ENCODE measurements at regions of chr9 and their contacts with region 1.

Region 1: GRCh38 chr9:120936011-120936763 is 9.6 kb upstream of the TRAF1 start:
- DNase-seq: peak; percentile 83
- ATAC-seq: peak; percentile 98
- H3K4me3 ChIP-seq: no peak overlapping the region
- H3K27ac ChIP-seq: peak overlapping the region; percentile 36; the same call in 1 of the 2 replicates
- H3K4me1 ChIP-seq: peaks cover 18 to 23% of the 10 kb centered on the region in 2 experiments
- H3K27me3 ChIP-seq: no peaks in the 10 kb centered on the region
- CTCF ChIP-seq: peak; percentile 93 to 98 (median 97)
- POLR2A ChIP-seq: no peak
- RAD21 ChIP-seq: peak; percentile 95

Region 2: GRCh38 chr9:120619751-120620655 is 316.2 kb before region 1 on chr9:
- CTCF ChIA-PET with region 1: no interaction called
- POLR2A ChIA-PET with region 1: no interaction called
- RAD21 ChIA-PET with region 1: no interaction called
- intact Hi-C with region 1: loop called (anchors 2 kb)
- DNase-seq: peak; percentile 47
- ATAC-seq: peak; percentile 94
- H3K4me3 ChIP-seq: no peak overlapping the region
- H3K27ac ChIP-seq: no peak overlapping the region
- H3K4me1 ChIP-seq: peaks cover under 1 to 6% of the 10 kb centered on the region in 2 experiments; a peak in 3 of 4 replicates
- H3K27me3 ChIP-seq: no peaks in the 10 kb centered on the region
- CTCF ChIP-seq: peak; percentile 67 to 92 (median 78)
- POLR2A ChIP-seq: no peak
- RAD21 ChIP-seq: peak; percentile 78

Region 3: GRCh38 chr9:120755827-120756434 is 180.3 kb before region 1 on chr9:
- CTCF ChIA-PET with region 1: interaction called, 29 read pairs
- POLR2A ChIA-PET with region 1: no interaction called
- RAD21 ChIA-PET with region 1: interaction called in 1 of 2 experiments, 4 read pairs
- intact Hi-C with region 1: loop called (anchors 1 kb)
- DNase-seq: peak; percentile 24
- ATAC-seq: peak; percentile 86
- H3K4me3 ChIP-seq: no peak overlapping the region
- H3K27ac ChIP-seq: no peak overlapping the region
- H3K4me1 ChIP-seq: no peaks in the 10 kb centered on the region
- H3K27me3 ChIP-seq: no peaks in the 10 kb centered on the region
- CTCF ChIP-seq: peak; percentile 74 to 93 (median 76)
- POLR2A ChIP-seq: no peak
- RAD21 ChIP-seq: peak; percentile 92

Region 4: DNA sequence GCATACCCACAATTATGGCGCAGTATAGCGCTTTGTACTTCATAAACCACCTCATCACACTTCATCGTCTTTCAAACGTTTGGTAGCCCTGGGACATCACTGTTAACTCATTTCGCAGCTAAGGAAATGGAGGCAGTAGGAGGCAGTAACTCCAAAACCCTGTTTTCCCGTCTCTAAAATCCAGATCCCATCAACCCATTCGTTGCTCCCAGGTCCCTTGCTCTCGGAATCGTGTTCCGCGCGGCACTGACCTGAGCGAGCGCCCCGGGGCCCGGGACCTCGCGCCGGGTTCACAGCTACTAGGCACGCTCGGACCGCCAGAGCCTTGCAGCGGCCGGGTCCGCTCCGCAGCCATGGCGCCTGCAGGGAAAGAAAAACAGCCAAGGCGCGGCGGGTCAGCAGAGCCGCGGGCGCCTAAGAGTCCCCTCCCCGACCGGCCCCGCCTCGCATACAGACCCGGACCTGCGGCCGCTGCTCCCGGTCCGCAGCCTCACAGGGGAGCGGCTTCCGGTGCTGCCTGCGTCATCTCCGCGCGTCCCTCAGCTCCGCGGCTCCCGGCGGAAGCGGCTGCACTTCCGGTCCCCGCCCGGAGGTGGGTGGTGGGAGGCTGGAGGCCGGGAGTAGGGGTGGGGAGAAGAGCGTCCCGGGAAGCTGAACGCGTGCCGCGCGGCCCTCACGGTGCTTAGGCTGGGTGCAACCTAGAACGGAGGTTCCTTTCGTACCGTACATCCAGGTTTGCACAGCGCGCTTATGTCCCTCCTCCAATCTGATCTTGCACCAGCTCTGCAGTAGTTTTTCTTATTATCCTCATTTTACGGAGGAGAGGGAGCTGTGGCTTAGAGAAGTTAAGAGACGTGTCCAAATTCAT is 143.1 kb before region 1 on chr9 and contains the start of gene FBXW2:
- CTCF ChIA-PET with region 1: no interaction called
- POLR2A ChIA-PET with region 1: interaction called, 3 read pairs
- RAD21 ChIA-PET with region 1: no interaction called
- intact Hi-C with region 1: loop called (anchors 1 kb)
- DNase-seq: peak; percentile 75
- ATAC-seq: peak; percentile 95
- H3K4me3 ChIP-seq: peak within 1 kb of the TSS; percentile 90 to 97
- H3K27ac ChIP-seq: peak within 1 kb of the TSS; percentile 77
- H3K4me1 ChIP-seq: peaks cover 0 to 19% of the 10 kb centered on the region in 2 experiments
- H3K27me3 ChIP-seq: no peaks in the 10 kb centered on the region
- CTCF ChIP-seq: no peak
- POLR2A ChIP-seq: peak; percentile 83
- RAD21 ChIP-seq: no peak
- total RNA-seq, gene FBXW2: 59.6 TPM

Region 5: GRCh38 chr9:120842690-120843499 is 93.3 kb before region 1 on chr9 and contains the start of gene PSMD5:
- CTCF ChIA-PET with region 1: interaction called, 3 read pairs
- POLR2A ChIA-PET with region 1: no interaction called
- RAD21 ChIA-PET with region 1: no interaction called
- intact Hi-C with region 1: loop called (anchors 1 kb)
- DNase-seq: peak; percentile 99
- ATAC-seq: peak; percentile 99
- H3K4me3 ChIP-seq: peak within 1 kb of the TSS; percentile 88 to 99
- H3K27ac ChIP-seq: peak within 1 kb of the TSS; percentile 65
- H3K4me1 ChIP-seq: peaks cover 9 to 20% of the 10 kb centered on the region in 2 experiments
- H3K27me3 ChIP-seq: no peaks in the 10 kb centered on the region
- CTCF ChIP-seq: no peak
- POLR2A ChIP-seq: peak; percentile 96
- RAD21 ChIP-seq: no peak
- total RNA-seq, gene PSMD5: 64.3 TPM

Region 6: DNA sequence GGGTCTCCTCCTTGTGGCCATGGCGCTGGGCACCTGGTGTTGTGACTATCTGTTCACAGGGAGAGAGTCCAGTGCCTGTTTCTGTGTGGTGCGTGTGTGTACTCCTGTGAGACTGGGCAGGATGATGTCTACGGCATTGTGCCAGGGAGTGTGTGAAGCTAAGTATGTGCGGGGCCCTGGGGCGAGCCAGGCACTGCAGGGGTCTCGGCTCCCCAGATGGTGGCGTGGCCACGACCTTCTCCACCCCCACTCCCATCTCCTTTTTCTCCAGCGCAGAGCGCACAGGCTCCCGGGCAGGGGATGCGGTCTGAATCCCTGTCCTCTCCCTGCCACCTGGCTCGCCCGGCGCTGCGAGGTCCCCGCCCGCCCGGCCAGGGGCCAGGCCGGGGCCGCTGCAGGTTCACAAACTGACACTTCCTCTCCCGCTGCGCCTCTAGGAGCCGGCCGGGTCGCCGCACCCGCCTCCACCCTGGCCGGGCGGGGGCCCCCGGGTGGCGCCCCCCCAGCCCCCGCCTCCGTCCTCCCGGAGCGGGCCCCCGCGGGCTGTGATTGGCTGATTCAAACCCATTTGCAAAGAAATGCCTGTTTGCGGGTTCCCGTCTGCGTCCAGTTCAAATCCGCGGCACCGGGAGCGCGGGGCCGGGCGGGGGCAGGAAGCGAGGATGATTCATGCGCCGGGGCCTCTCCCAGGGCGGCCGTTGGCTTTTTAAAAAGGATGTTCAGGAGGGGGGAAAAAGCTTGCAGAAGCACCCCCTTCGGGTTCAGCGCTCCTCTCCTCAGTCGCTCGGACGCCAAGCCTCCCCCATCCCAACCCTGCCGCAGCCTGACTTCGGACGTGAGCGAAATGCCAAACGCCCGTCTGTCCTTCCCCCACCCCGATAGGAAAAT is 60.0 kb before region 1 on chr9:
- CTCF ChIA-PET with region 1: interaction called, 3 read pairs
- POLR2A ChIA-PET with region 1: interaction called, 3 read pairs
- RAD21 ChIA-PET with region 1: no interaction called
- intact Hi-C with region 1: loop called (anchors 5 kb)
- DNase-seq: peak; percentile 73
- ATAC-seq: peak; percentile 59
- H3K4me3 ChIP-seq: peak overlapping the region; percentile 45 to 74
- H3K27ac ChIP-seq: peak overlapping the region; percentile 89
- H3K4me1 ChIP-seq: peaks cover 44 to 55% of the 10 kb centered on the region in 2 experiments
- H3K27me3 ChIP-seq: no peaks in the 10 kb centered on the region
- CTCF ChIP-seq: no peak
- POLR2A ChIP-seq: peak; percentile 25
- RAD21 ChIP-seq: no peak

Measured in HCT116 (cell line).